Heart right ventricle (tissue), 16 donors: ENCODE measurements at regions of chr17 and their contacts with region 1.

Region 1: GRCh38 chr17:41777574-41778188 is 8.8 kb downstream of the JUP start:
- DNase-seq: peak; percentile 87 to 89
- ATAC-seq: peak; percentile 43 to 77 (median 66)
- H3K4me3 ChIP-seq: peak overlapping the region in 4 of 10 donors; percentile 6 to 22 (median 10)
- H3K27ac ChIP-seq: peak overlapping the region; percentile 86 to 97 (median 95)
- H3K4me1 ChIP-seq: peaks cover 65 to 100% (median 99%) of the 10 kb centered on the region in 9 donors
- H3K27me3 ChIP-seq: no peaks in the 10 kb centered on the region
- CTCF ChIP-seq: peak in 1 of 9 donors; percentile 21

Region 2: GRCh38 chr17:41750862-41751261 is 26.8 kb before region 1 on chr17:
- intact Hi-C with region 1: loop called in 1 of 10 experiments (anchors 2 kb)
- DNase-seq: no peak
- ATAC-seq: no peak
- H3K4me3 ChIP-seq: no peak overlapping the region
- H3K27ac ChIP-seq: no peak overlapping the region
- H3K4me1 ChIP-seq: no peaks in the 10 kb centered on the region
- H3K27me3 ChIP-seq: no peaks in the 10 kb centered on the region
- CTCF ChIP-seq: no peak

Region 3: DNA sequence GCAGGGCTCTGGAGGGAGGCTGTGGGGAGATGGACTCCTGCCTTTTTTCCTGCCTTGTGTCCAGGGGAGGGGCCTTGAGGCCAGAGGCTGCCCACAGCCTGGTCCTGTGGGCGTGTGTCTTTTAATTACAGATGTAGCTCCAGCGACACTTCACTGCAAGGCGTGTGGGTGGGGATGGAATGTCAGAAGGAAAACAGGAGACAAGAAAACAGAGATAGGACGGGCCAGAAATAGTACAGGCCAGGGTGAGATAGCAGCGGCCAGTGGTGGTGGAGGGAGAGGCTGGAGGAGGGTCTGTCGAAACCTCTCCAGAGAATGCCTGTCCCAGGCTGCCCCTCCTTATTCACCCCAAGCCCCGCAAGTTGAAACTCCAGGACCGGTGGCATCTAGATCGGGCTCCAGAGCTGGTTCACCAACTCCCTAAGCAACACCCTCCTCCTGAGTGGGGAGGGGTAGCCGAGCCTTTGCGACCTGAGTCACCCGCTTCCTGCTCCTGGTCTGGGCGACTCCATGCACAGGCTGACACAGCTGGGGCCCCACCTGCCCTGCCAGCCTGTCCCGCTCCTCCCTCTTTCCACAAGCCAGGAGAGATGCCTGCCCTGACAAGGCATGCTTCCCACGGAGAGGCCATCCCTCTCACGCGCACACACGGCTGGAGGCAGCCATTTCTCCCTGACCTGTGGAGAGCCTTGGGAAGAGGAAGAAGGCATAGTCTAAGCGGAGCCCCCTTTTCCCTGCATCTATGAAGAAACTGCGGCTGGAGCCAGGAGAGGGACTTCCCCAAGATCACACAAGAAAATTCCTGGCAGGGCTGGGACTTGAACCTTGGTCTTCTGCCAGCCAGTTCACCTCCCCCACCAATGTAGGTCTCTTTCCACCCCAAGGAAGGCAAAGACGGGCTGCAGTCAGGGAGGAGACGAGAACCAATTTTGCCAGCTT is 15.4 kb after region 1 on chr17:
- intact Hi-C with region 1: loop called in 1 of 10 experiments (anchors 2 kb)
- DNase-seq: peak; percentile 60 to 78
- ATAC-seq: peak; percentile 77 to 91 (median 86)
- H3K4me3 ChIP-seq: peak overlapping the region in 7 of 10 donors; percentile 12 to 34 (median 30)
- H3K27ac ChIP-seq: peak overlapping the region; percentile 75 to 98 (median 90)
- H3K4me1 ChIP-seq: peaks cover 14 to 44% (median 34%) of the 10 kb centered on the region in 9 donors
- H3K27me3 ChIP-seq: no peaks in the 10 kb centered on the region
- CTCF ChIP-seq: no peak

Region 4: GRCh38 chr17:41801374-41802271 is 23.9 kb after region 1 on chr17:
- intact Hi-C with region 1: loop called in 1 of 10 experiments (anchors 1 kb)
- DNase-seq: peak; percentile 84 to 85
- ATAC-seq: peak; percentile 78 to 94 (median 89)
- H3K4me3 ChIP-seq: peak overlapping the region in 3 of 10 donors; percentile 22 to 31 (median 26)
- H3K27ac ChIP-seq: peak overlapping the region in 2 of 10 donors; percentile 41 to 54
- H3K4me1 ChIP-seq: peaks cover 2 to 17% (median 11%) of the 10 kb centered on the region in 9 donors
- H3K27me3 ChIP-seq: no peaks in the 10 kb centered on the region
- CTCF ChIP-seq: peak; percentile 92 to 99 (median 97)

Region 5: DNA sequence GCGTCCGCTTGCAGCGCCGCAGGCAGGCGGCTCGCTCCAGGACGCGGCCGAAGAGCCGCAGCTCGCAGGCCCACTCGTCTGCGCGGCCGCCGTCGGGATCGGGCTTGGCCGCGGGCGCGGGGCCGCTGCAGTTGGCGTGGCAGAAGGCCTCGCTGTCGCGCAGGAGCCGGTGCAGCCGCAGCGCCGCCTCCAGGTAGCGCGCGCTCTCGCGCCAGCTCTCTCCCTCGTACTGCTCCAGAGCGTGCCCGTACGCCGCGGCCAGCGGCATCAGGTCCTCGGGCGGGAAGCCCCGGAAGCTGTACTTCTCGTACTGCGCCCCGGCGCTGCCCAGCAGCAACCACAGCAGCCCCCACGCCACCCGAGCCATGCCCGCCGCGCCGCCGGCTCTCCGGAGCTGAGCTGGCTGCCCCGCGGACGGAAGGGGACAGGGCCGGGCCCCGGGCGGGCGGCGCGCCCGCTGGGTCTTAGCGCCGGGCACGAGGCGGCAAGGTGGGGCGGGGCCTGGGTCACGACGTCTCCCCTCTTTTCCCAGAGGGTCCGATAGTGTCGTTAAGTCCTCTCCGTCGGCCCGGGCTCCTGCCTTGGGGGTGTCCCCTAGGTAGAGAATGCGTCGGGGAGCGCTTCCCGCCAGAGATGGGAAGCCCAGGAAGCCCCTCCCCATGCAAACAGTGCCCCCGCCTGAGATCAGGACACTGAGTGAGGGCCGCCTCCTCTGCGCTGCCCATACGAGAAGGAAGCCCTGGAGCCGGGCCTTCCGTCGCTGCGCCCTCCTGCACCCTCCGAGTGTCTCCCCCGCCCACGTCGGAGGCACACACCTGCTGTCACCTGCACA is 34.1 kb after region 1 on chr17 and contains the start of gene P3H4:
- intact Hi-C with region 1: loop called in 1 of 10 experiments (anchors 5 kb)
- DNase-seq: peak; percentile 68 to 83
- ATAC-seq: peak; percentile 76 to 89 (median 86)
- H3K4me3 ChIP-seq: peak within 1 kb of the TSS; percentile 38 to 97 (median 74)
- H3K27ac ChIP-seq: peak within 1 kb of the TSS; percentile 17 to 82 (median 74)
- H3K4me1 ChIP-seq: peaks cover 6 to 35% (median 31%) of the 10 kb centered on the region in 9 donors
- H3K27me3 ChIP-seq: peaks cover 0 to 32% (median 0%) of the 10 kb centered on the region in 7 donors
- CTCF ChIP-seq: peak; percentile 46 to 87 (median 72)
- total RNA-seq, gene P3H4: 2.0 to 7.5 (median 3.8) TPM